Kidney (tissue), 22 donors: ENCODE measurements at regions of chr1 and their contacts with region 1.

Region 1: DNA sequence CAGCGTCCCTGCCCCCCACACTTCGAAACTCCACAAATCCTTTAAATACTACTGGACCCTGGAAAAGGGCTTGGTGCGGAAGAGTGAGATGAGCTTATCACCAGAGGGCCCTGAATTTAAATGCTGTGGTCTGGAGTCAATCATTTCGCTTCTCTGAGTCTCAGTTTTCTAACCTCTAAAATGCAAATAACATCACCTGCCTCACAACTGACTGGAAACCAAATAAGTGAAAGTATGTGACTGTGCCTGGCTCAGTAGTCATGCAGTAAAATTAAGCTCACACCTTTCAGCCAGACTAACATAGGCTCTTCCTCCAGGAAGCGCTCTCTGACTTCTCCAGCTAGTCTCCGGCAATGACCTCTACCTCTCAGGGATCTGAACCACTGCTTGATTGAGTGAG is 4.2 kb downstream of the GJA4 start:
- DNase-seq: no peak
- H3K4me3 ChIP-seq: peak overlapping the region in 2 of 3 donors; percentile 9 to 40
- H3K27ac ChIP-seq: peak overlapping the region in 1 of 2 donors; percentile 65
- H3K4me1 ChIP-seq: peaks cover 0 to 11% (median 0%) of the 10 kb centered on the region in 3 donors
- H3K27me3 ChIP-seq: no peaks in the 10 kb centered on the region
- CTCF ChIP-seq: no peak

Region 2: DNA sequence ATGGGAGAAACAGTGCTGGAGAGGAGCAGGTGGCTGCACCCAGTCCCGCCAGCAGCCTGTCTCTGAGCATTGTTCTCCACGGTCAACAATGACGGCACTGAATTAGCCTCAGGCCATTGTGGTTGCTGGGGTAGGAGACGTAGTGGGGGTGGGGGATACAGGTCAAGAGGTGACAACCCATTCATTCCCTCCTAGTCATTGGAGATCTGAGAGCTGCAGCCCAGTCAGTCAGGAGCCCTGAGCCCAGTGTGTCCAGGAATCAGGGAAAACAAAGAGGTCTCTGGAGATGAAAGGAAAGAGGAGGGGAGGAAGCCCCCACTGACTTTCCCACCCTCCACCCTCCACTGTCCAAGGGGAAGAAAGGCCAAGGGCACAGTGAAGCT is 47.3 kb after region 1 on chr1:
- intact Hi-C with region 1: loop called (anchors 10 kb)
- DNase-seq: peak in 1 of 5 donors; percentile 29
- H3K4me3 ChIP-seq: no peak overlapping the region
- H3K27ac ChIP-seq: no peak overlapping the region
- H3K4me1 ChIP-seq: peaks cover 0 to 14% (median 10%) of the 10 kb centered on the region in 3 donors
- H3K27me3 ChIP-seq: no peaks in the 10 kb centered on the region
- CTCF ChIP-seq: no peak

Region 3: GRCh38 chr1:34885405-34886247 is 88.6 kb after region 1 on chr1:
- intact Hi-C with region 1: no loop called
- DNase-seq: peak in 4 of 5 donors; percentile 66 to 74 (median 72)
- H3K4me3 ChIP-seq: no peak overlapping the region
- H3K27ac ChIP-seq: no peak overlapping the region
- H3K4me1 ChIP-seq: no peaks in the 10 kb centered on the region
- H3K27me3 ChIP-seq: peaks cover 4% of the 10 kb centered on the region
- CTCF ChIP-seq: no peak

Region 4: GRCh38 chr1:35287807-35288640 is 491.0 kb after region 1 on chr1:
- intact Hi-C with region 1: no loop called
- DNase-seq: no peak
- H3K4me3 ChIP-seq: no peak overlapping the region
- H3K27ac ChIP-seq: no peak overlapping the region
- H3K4me1 ChIP-seq: no peaks in the 10 kb centered on the region
- H3K27me3 ChIP-seq: no peaks in the 10 kb centered on the region
- CTCF ChIP-seq: no peak